ENCODE measurements at regions of chr5 and their contacts with region 1.

Region 1: DNA sequence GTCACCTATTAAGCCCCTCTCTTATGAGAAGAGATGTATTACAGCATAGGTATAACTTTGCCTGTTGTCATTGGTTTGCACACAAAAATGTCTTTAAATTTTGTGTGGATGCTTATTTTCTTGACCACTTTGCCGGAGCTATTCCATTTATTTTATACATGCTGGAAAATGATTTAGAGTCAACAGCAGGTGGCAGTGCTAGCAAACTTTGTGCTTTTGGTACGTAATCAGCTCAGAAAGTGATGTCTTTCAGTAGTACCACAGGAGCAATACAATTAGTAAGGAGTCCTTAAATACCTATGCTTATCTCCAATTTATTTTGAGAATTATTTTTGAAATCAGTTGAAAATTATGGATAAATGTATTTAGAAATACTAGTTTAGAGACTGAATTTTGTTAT is 19.8 kb upstream of the NUDT12 start:
- DNase-seq: peak in 4 of 10 donors; percentile 32 to 49 (median 38)

Region 2: GRCh38 chr5:103808464-103809106 is 226.2 kb after region 1 on chr5:
- intact Hi-C with region 1: loop called (anchors 5 kb)
- DNase-seq: peak in 5 of 10 donors; percentile 18 to 53 (median 35)

Measured in posterior cingulate gyrus (tissue), 11 donors.